ENCODE measurements at regions of chr11 and their contacts with region 1.

Region 1: GRCh38 chr11:110272919-110273318 is 23.5 kb downstream of the RDX start:
- DNase-seq: no peak
- H3K4me3 ChIP-seq: no peak overlapping the region
- H3K27ac ChIP-seq: no peak overlapping the region
- H3K4me1 ChIP-seq: no peaks in the 10 kb centered on the region
- H3K27me3 ChIP-seq: no peaks in the 10 kb centered on the region
- CTCF ChIP-seq: no peak

Region 2: DNA sequence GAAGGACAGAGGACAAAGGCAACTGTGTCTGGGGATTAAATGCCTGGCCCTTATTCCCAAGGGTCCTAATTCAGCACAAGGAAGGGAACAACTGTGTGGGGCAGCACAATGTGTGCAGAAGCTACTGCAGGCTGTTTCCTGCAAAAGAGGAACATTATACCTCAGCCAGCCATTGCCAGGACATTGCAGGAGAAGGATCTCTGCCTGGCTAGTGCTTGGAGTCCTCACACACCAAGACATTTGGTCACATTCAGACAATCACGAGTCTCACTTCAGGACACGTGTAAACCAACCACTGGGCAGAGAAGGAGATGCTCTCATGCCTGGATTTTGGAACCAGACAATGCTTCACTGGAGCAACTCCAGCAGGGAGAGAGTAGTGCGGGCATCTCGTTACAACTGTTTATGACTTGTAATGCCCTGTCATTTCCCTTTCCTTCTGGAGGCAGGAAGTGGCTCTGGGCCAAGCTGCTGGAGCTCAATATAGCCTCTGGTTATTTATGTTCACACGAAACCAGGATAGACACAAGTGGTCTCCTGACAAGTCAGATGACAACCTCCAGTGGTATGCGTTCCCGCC is 203.7 kb before region 1 on chr11:
- CTCF ChIA-PET with region 1: no interaction called
- POLR2A ChIA-PET with region 1: no interaction called
- intact Hi-C with region 1: no loop called
- DNase-seq: peak; percentile 50 to 89
- H3K4me3 ChIP-seq: no peak overlapping the region
- H3K27ac ChIP-seq: peak overlapping the region; percentile 57
- H3K4me1 ChIP-seq: peaks cover 37% of the 10 kb centered on the region
- H3K27me3 ChIP-seq: no peaks in the 10 kb centered on the region
- CTCF ChIP-seq: no peak

Region 3: GRCh38 chr11:110230377-110230776 is 42.5 kb before region 1 on chr11:
- CTCF ChIA-PET with region 1: no interaction called
- POLR2A ChIA-PET with region 1: no interaction called
- intact Hi-C with region 1: loop called (anchors 5 kb)
- DNase-seq: no peak
- H3K4me3 ChIP-seq: no peak overlapping the region
- H3K27ac ChIP-seq: no peak overlapping the region
- H3K4me1 ChIP-seq: no peaks in the 10 kb centered on the region
- H3K27me3 ChIP-seq: no peaks in the 10 kb centered on the region
- CTCF ChIP-seq: no peak

Region 4: GRCh38 chr11:110463153-110463552 is 190.2 kb after region 1 on chr11:
- CTCF ChIA-PET with region 1: no interaction called
- POLR2A ChIA-PET with region 1: no interaction called
- intact Hi-C with region 1: no loop called
- DNase-seq: peak in 1 of 2 experiments; percentile 12
- H3K4me3 ChIP-seq: no peak overlapping the region
- H3K27ac ChIP-seq: no peak overlapping the region
- H3K4me1 ChIP-seq: no peaks in the 10 kb centered on the region
- H3K27me3 ChIP-seq: no peaks in the 10 kb centered on the region
- CTCF ChIP-seq: peak; percentile 55

Measured in PC-9 (cell line).